ENCODE measurements at regions of chr12 and their contacts with region 1.

Region 1: GRCh38 chr12:17511369-17511768 is 578.6 kb downstream of the RERGL start:
- DNase-seq: no peak
- ATAC-seq: 0 out of 3 replicates have a peak, but pooled peaks have one; percentile 27
- H3K4me3 ChIP-seq: no peak overlapping the region
- H3K27ac ChIP-seq: no peak overlapping the region
- H3K4me1 ChIP-seq: no peaks in the 10 kb centered on the region
- H3K27me3 ChIP-seq: no peaks in the 10 kb centered on the region
- CTCF ChIP-seq: 0 out of 6 replicates have a peak, but pooled peaks of 1 of the 3 experiments have one; percentile 7
- EP300 ChIP-seq: no peak
- POLR2A ChIP-seq: no peak
- RAD21 ChIP-seq: no peak

Region 2: DNA sequence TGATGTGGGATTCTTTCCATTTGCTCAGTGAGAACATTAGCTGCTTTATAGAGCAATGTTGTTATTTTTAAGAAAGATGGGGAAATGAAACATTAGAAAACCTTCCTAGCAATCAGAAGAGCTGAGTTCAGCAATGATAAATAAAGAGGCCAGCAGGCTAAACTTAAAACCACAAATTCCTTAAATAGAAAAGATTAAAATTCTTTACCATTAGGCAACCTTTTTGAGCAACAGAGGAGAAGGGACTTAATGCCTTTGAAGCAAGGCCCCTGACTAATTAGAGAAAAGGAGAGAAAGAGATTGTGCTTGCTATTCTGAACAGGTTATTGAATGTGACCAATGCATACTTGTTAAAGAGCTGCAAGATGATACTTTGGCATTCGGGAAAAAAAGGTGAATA is 744.6 kb before region 1 on chr12:
- CTCF ChIA-PET with region 1: no interaction called
- POLR2A ChIA-PET with region 1: no interaction called
- RAD21 ChIA-PET with region 1: no interaction called
- SMC1A ChIA-PET with region 1: no interaction called
- in situ Hi-C with region 1: no loop called
- intact Hi-C with region 1: no loop called
- DNase-seq: no peak
- ATAC-seq: no peak
- H3K4me3 ChIP-seq: no peak overlapping the region
- H3K27ac ChIP-seq: no peak overlapping the region
- H3K4me1 ChIP-seq: no peaks in the 10 kb centered on the region
- H3K27me3 ChIP-seq: no peaks in the 10 kb centered on the region
- CTCF ChIP-seq: no peak
- EP300 ChIP-seq: no peak
- POLR2A ChIP-seq: no peak
- RAD21 ChIP-seq: no peak

Region 3: GRCh38 chr12:17489452-17489851 is 21.9 kb before region 1 on chr12:
- CTCF ChIA-PET with region 1: interaction called, 3 read pairs
- POLR2A ChIA-PET with region 1: no interaction called
- RAD21 ChIA-PET with region 1: no interaction called
- SMC1A ChIA-PET with region 1: no interaction called
- in situ Hi-C with region 1: no loop called
- intact Hi-C with region 1: loop called (anchors 2 kb)
- DNase-seq: no peak
- ATAC-seq: no peak
- H3K4me3 ChIP-seq: no peak overlapping the region
- H3K27ac ChIP-seq: no peak overlapping the region
- H3K4me1 ChIP-seq: no peaks in the 10 kb centered on the region
- H3K27me3 ChIP-seq: no peaks in the 10 kb centered on the region
- CTCF ChIP-seq: no peak
- EP300 ChIP-seq: no peak
- POLR2A ChIP-seq: no peak
- RAD21 ChIP-seq: no peak

Region 4: DNA sequence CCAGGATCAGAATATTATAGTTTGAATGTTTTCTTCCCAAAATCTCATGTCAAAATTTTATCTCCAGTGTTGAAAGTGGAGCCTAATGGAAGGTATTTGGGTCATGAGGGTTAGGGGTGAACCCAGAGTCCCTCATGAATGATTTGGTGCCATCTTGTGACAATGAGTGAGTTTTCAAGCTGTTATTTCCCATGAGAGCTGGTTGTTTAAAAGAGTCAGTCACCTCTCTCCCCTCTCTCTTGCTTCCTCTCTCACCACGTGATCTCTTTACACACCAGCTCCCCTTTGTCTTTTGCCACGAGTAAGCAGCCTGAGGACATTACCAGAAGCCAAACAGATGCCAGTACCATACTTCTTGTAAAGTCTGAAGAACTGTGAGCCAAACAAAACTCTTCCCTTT is 17.0 kb after region 1 on chr12:
- CTCF ChIA-PET with region 1: no interaction called
- POLR2A ChIA-PET with region 1: no interaction called
- RAD21 ChIA-PET with region 1: no interaction called
- SMC1A ChIA-PET with region 1: no interaction called
- in situ Hi-C with region 1: no loop called
- intact Hi-C with region 1: no loop called
- DNase-seq: no peak
- ATAC-seq: no peak
- H3K4me3 ChIP-seq: no peak overlapping the region
- H3K27ac ChIP-seq: no peak overlapping the region
- H3K4me1 ChIP-seq: no peaks in the 10 kb centered on the region
- H3K27me3 ChIP-seq: no peaks in the 10 kb centered on the region
- CTCF ChIP-seq: no peak
- EP300 ChIP-seq: no peak
- POLR2A ChIP-seq: no peak
- RAD21 ChIP-seq: no peak

Region 5: DNA sequence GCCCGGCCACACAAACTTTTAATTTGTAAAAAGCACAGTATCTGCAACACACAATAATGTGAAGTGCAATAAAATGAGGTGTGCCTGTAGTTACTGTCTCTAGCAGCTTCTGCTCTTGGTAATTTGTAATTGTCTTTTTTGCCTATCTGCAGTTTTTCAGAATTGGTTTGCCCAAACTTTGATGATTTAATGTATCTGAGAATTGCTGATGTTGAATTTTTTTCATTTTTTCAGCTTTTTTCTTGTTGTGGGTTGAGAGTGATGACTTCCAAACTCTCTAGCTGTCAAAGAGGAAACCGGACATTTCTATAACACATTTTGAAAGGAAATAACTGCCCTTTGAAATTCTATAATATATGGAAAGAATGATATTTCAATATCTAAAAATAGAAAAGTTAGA is 341.7 kb after region 1 on chr12:
- CTCF ChIA-PET with region 1: no interaction called
- POLR2A ChIA-PET with region 1: no interaction called
- RAD21 ChIA-PET with region 1: no interaction called
- SMC1A ChIA-PET with region 1: no interaction called
- in situ Hi-C with region 1: no loop called
- intact Hi-C with region 1: no loop called
- DNase-seq: no peak
- ATAC-seq: no peak
- H3K4me3 ChIP-seq: no peak overlapping the region
- H3K27ac ChIP-seq: no peak overlapping the region
- H3K4me1 ChIP-seq: no peaks in the 10 kb centered on the region
- H3K27me3 ChIP-seq: no peaks in the 10 kb centered on the region
- CTCF ChIP-seq: no peak
- EP300 ChIP-seq: no peak
- POLR2A ChIP-seq: no peak
- RAD21 ChIP-seq: no peak

Measured in GM12878 (cell line).